Mammary epithelial cell (primary cell): ENCODE measurements at regions of chr1 and their contacts with region 1.

Region 1: DNA sequence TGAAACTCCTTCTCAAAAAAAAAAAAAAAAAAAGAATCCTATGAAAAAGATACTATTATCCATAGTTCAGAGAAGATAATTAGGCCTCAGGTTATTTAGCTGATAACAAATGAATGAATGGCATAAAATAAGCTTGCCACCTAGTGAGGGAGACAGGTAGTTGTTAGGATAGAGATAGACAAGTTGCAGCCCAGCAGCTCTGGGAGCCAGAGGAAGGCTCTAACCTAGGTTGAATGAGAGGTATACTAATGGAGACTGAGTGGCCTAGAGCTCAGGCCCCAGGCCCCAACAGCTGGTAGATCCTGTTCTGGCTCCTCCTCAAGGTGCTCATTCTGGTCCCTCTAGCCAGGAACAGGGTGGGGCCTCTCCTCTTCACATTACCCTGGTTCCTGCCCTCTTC is 20.6 kb upstream of the RSPO1 start:
- DNase-seq: no peak
- H3K4me3 ChIP-seq: no peak overlapping the region
- H3K27ac ChIP-seq: no peak overlapping the region
- H3K4me1 ChIP-seq: no peaks in the 10 kb centered on the region
- H3K27me3 ChIP-seq: no peaks in the 10 kb centered on the region
- CTCF ChIP-seq: peak in 1 of 2 donors; percentile 12

Region 2: DNA sequence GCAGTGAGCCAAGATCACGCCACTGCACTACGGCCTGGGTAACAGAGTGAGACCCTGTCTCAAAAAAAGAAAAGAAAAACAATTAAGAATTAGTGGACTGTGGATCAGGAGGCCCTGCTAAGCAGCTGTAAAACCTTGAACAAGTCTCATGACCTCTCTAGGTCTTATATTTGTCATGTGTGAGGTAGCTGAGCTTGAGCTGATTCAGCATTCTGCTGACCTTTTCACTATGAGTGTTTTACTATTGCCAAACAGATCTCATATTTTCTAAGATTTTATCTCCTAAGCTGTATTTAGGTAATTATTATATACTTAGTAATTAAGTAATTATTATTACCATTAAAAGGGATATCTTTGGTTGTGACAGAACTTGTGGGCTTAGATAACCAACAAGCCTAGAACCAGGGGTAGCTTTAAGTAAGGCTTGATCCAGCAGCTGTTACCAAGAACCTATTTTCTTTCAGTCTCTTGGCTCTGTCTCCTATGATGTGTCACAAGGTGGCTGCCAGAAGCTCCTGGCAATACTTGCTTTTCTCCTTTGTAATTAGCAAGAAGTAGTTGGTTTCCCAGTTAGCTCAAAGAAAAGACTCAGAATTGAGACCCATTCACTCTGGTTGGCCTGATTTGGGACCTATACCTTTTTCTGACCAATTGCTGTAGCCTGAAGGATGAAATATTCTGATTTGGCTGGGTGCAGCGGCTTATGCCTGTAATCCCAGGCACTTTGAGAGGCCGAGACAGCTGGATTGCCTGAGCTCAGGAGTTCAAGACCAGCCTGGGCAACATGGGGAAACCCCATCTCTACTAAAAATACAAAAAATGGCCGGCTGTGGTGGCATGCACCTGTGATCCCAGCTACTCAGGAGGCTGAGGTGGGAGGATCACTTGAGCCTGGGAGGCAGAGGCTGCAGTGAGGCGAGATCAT is 189.4 kb before region 1 on chr1:
- CTCF ChIA-PET with region 1: interaction called, 21 read pairs
- dilution Hi-C with region 1: no loop called
- in situ Hi-C with region 1: no loop called
- intact Hi-C with region 1: no loop called
- DNase-seq: no peak
- H3K4me3 ChIP-seq: no peak overlapping the region
- H3K27ac ChIP-seq: no peak overlapping the region
- H3K4me1 ChIP-seq: peaks cover 4% of the 10 kb centered on the region
- H3K27me3 ChIP-seq: no peaks in the 10 kb centered on the region
- CTCF ChIP-seq: no peak

Region 3: DNA sequence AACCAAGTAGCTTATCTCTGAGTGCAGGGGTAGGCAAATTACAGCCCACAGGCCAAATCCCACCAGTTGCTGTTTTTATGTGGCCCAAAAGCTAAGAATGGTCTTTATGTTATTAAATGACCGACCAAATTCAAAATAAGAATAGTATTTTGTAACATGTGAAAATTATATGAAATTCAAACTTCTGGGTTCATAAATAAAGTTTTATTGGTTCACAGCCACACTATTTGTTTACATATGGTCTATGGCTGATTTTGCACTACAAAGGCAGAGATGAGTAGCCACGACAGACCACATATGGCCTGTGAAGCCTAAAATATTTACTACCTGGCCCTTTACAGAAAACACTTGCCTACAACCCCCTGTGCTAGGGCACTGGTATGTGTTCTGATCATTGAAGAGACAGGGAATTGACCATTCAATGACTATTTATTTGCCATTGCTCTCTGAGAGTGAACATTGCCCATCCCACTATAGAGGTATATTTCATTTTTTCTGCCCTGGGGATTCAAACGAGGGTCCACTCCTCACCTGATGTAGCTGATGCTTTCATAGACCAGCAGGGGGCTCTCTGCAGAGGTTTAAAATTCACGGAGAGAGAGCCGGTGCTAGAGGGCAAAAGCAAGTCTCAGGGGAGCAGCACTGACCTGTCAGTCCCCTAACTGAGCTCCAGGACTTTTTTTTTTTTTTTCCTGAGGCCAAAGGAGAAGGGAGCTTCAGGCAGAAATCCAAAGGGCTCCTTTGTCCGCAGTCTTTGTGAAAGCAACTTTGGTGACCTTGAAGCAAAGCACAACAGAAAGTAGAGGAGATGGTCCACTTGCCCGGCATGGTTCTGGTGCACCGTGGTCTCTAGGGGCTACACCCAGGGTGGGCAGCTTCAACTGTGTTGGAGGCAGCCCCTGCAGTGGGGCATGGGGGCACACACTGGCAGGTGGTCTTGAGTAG is 52.3 kb before region 1 on chr1:
- CTCF ChIA-PET with region 1: interaction called, 10 read pairs
- dilution Hi-C with region 1: no loop called
- in situ Hi-C with region 1: no loop called
- intact Hi-C with region 1: no loop called
- DNase-seq: no peak
- H3K4me3 ChIP-seq: no peak overlapping the region
- H3K27ac ChIP-seq: no peak overlapping the region
- H3K4me1 ChIP-seq: no peaks in the 10 kb centered on the region
- H3K27me3 ChIP-seq: peaks cover 3% of the 10 kb centered on the region
- CTCF ChIP-seq: peak; percentile 61 to 74

Region 4: GRCh38 chr1:37704966-37705365 is 49.7 kb after region 1 on chr1:
- CTCF ChIA-PET with region 1: no interaction called
- dilution Hi-C with region 1: no loop called
- in situ Hi-C with region 1: no loop called
- intact Hi-C with region 1: no loop called
- DNase-seq: no peak
- H3K4me3 ChIP-seq: no peak overlapping the region
- H3K27ac ChIP-seq: no peak overlapping the region
- H3K4me1 ChIP-seq: no peaks in the 10 kb centered on the region
- H3K27me3 ChIP-seq: no peaks in the 10 kb centered on the region
- CTCF ChIP-seq: no peak